ENCODE measurements at regions of chr2 and their contacts with region 1.

Region 1: GRCh38 chr2:171598713-171599319 is 76.5 kb downstream of the CYBRD1 start:
- H3K4me3 ChIP-seq: no peak overlapping the region
- H3K27ac ChIP-seq: no peak overlapping the region
- H3K4me1 ChIP-seq: no peaks in the 10 kb centered on the region
- CTCF ChIP-seq: peak; percentile 43; the same call in 1 of the 2 replicates

Region 2: GRCh38 chr2:171587567-171587966 is 11.2 kb before region 1 on chr2:
- CTCF ChIA-PET with region 1: interaction called, 31 read pairs
- POLR2A ChIA-PET with region 1: no interaction called
- H3K4me3 ChIP-seq: no peak overlapping the region
- H3K27ac ChIP-seq: no peak overlapping the region
- H3K4me1 ChIP-seq: no peaks in the 10 kb centered on the region
- CTCF ChIP-seq: no peak

Region 3: DNA sequence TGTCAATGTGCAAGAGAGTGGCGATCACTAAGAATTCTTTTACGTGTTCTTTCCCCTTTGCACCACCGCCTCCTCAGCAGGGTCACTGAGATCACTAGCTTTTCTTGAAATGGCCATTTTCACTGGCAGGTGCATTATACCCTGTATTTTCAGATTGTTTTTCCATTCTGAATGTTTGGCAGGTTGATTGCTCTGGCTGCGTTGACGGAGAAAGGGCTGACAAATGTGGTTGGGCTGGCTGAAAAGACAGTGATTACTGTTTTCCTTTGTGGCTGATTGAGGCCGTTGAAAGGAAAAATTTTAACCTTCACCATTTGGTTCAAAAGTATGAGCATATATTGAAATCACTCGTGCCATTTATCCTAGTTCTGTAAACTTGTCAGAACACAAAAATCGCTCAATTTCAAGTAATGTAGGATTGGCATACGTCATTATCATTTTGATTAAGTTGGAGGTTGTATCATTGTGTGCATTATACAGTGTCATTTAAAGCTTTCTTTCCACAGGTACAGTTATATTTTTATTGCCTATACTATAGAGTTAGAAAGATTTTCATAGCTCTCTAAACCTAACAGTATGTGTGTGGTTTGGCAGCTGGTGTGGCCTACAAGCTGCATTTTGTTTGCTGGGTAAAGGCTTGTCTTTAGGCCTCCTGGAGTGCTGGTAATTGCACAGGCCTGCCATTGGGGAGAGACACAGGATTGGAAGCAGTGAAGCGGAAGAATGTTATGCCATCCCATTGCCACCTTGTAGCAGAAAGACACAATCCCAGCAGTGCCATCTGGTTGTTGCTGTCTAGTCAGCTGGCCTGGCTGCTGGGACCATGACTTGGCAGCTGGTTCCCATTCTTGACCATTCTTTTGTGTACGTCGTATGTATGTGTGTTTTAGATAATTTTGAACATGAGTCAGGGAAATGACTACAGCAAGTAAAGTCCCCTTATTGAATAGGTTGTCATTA is 125.2 kb after region 1 on chr2:
- CTCF ChIA-PET with region 1: no interaction called
- POLR2A ChIA-PET with region 1: no interaction called
- H3K4me3 ChIP-seq: no peak overlapping the region
- H3K27ac ChIP-seq: no peak overlapping the region
- H3K4me1 ChIP-seq: peaks cover 7% of the 10 kb centered on the region; the same call in 1 of the 2 replicates
- CTCF ChIP-seq: peak; percentile 40

Measured in HEK293 (cell line).